CD4-positive, alpha-beta memory T cell (primary cell): ENCODE measurements at regions of chr12 and their contacts with region 1.

Region 1: DNA sequence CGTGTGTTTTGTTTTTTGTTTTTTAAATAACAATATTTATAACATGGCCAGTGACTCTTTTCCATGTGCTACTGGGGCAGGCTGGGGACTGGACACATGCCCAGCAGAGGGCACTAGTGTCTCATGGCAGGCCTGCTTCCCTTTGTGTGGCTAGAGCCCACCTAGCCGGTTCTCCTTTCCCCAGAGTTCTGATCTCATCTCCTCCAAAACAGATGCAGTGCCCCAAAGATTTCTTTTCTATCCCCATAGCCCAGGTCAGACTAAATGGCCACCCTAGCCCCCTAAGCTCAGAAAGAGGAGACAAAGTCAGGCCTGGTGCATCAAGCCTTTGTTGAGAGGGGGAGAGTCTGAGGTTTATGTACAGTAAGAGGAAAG is 21.2 kb downstream of the PRPF40B start:
- DNase-seq: peak; percentile 79 to 85 (median 80)
- H3K4me3 ChIP-seq: no peak overlapping the region
- H3K4me3 Mint-ChIP-seq: peak overlapping the region in 3 of 8 donors; percentile 36 to 43 (median 37)
- H3K27ac ChIP-seq: peak overlapping the region; percentile 42
- H3K27ac Mint-ChIP-seq: peak overlapping the region; percentile 76 to 96 (median 93)
- H3K4me1 ChIP-seq: peaks cover 18% of the 10 kb centered on the region
- H3K4me1 Mint-ChIP-seq: peaks cover 13 to 35% (median 22%) of the 10 kb centered on the region in 4 donors
- H3K27me3 ChIP-seq: no peaks in the 10 kb centered on the region
- H3K27me3 Mint-ChIP-seq: no peaks in the 10 kb centered on the region

Region 2: DNA sequence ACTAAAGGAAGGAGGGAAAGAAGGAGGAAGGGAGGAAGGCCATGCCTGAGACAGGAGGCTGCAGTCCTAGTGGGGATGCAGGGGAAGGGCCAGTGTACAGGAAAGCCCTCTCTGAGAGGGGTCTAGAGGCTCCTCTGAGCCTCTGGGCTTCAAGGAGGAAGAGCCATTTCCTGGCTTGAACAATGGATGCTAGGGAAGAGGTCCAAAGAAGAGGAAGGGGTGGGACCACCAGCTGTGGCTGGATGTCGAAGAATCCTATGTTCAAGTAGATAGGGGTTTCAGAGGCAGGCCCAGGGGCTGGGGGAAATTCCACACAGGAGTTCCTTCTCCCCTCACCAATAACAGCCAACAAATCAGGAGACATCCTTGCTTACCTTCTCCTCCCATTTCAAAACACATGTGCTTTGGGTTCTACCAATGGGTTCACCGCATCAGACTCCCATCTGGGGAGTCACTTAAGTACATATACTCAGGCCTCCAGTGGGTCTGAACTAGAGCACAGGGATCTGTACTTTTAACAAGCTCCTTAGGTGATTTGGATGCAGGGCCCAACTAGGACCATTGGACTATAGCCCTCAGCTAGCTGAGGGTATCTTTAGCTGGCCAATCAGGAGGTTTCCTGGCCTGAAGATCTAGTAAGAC is 11.1 kb after region 1 on chr12:
- CTCF ChIA-PET with region 1: interaction called, 55 read pairs
- POLR2A ChIA-PET with region 1: interaction called, 32 read pairs
- intact Hi-C with region 1: no loop called
- DNase-seq: no peak
- H3K4me3 ChIP-seq: no peak overlapping the region
- H3K4me3 Mint-ChIP-seq: peak overlapping the region in 2 of 8 donors; percentile 4 to 39
- H3K27ac ChIP-seq: no peak overlapping the region
- H3K27ac Mint-ChIP-seq: peak overlapping the region in 5 of 7 donors; percentile 24 to 86 (median 66)
- H3K4me1 ChIP-seq: peaks cover 15% of the 10 kb centered on the region
- H3K4me1 Mint-ChIP-seq: peaks cover 13 to 34% (median 27%) of the 10 kb centered on the region in 4 donors
- H3K27me3 ChIP-seq: no peaks in the 10 kb centered on the region
- H3K27me3 Mint-ChIP-seq: no peaks in the 10 kb centered on the region

Region 3: GRCh38 chr12:49662998-49663843 is 18.6 kb after region 1 on chr12:
- CTCF ChIA-PET with region 1: interaction called, 55 read pairs
- POLR2A ChIA-PET with region 1: interaction called, 32 read pairs
- intact Hi-C with region 1: loop called (anchors 2 kb)
- DNase-seq: peak; percentile 71 to 93 (median 75)
- H3K4me3 ChIP-seq: peak overlapping the region; percentile 48 to 50
- H3K4me3 Mint-ChIP-seq: peak overlapping the region; percentile 61 to 91 (median 84)
- H3K27ac ChIP-seq: peak overlapping the region; percentile 57
- H3K27ac Mint-ChIP-seq: peak overlapping the region; percentile 92 to 99 (median 97)
- H3K4me1 ChIP-seq: peaks cover 52% of the 10 kb centered on the region
- H3K4me1 Mint-ChIP-seq: peaks cover 56 to 84% (median 67%) of the 10 kb centered on the region in 4 donors
- H3K27me3 ChIP-seq: no peaks in the 10 kb centered on the region
- H3K27me3 Mint-ChIP-seq: no peaks in the 10 kb centered on the region

Region 4: GRCh38 chr12:50246873-50247612 is 602.4 kb after region 1 on chr12:
- CTCF ChIA-PET with region 1: no interaction called
- POLR2A ChIA-PET with region 1: no interaction called
- intact Hi-C with region 1: no loop called
- DNase-seq: no peak
- H3K4me3 ChIP-seq: no peak overlapping the region
- H3K4me3 Mint-ChIP-seq: peak overlapping the region in 1 of 8 donors; percentile 5
- H3K27ac ChIP-seq: no peak overlapping the region
- H3K27ac Mint-ChIP-seq: peak overlapping the region in 1 of 7 donors; percentile 75
- H3K4me1 ChIP-seq: no peaks in the 10 kb centered on the region
- H3K4me1 Mint-ChIP-seq: peaks cover 2 to 7% (median 4%) of the 10 kb centered on the region in 4 donors
- H3K27me3 ChIP-seq: no peaks in the 10 kb centered on the region
- H3K27me3 Mint-ChIP-seq: peaks cover 0 to 2% of the 10 kb centered on the region in 2 donors